Activated B cell treated with CpG ODN at 0.5 μM for 24 hours (primary cell): ENCODE measurements at regions of chr10 and their contacts with region 1.

Region 1: DNA sequence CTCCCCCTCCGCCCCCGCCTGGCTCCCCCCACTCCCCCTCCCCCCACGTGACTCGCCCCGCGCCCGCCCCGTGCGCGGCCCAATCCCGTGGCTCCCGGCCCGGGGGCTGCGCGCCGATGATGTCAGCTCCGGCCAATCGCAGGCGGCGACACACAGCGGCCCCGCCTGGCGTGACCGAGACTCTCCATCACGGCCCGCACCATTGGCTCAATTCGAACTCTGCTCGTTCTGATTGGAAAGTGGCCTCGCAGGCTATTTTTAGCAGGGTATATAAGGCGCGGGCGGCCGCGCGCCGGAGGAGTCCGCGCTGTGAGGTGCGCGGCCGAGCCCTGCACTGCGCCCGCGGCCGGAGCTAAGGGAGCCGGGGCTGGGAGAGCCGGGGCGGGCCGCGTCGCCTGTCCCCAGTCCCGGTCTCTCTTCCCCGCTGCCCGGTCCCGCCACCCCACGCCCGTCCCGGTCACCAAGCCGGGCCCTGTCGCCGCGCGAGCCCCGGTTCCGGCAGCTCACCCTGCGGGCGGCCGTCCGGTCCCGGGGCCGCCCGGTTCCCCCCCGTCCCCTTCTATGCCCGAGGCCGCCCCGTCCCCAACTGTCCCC is 345 bp upstream of the KLF6 start:
- DNase-seq: peak; percentile 98
- ATAC-seq: peak; percentile 71
- H3K4me3 Mint-ChIP-seq: peak overlapping the region; percentile 91
- H3K27ac Mint-ChIP-seq: peak overlapping the region; percentile 98
- H3K4me1 Mint-ChIP-seq: peaks cover 33% of the 10 kb centered on the region
- H3K27me3 Mint-ChIP-seq: no peaks in the 10 kb centered on the region
- CTCF ChIP-seq: no peak

Region 2: GRCh38 chr10:3652886-3653285 is 132.5 kb before region 1 on chr10:
- CTCF ChIA-PET with region 1: no interaction called
- POLR2A ChIA-PET with region 1: interaction called, 10 read pairs
- intact Hi-C with region 1: loop called (anchors 5 kb)
- DNase-seq: no peak
- ATAC-seq: no peak
- H3K4me3 Mint-ChIP-seq: peak overlapping the region; percentile 21
- H3K27ac Mint-ChIP-seq: no peak overlapping the region
- H3K4me1 Mint-ChIP-seq: peaks cover 18% of the 10 kb centered on the region
- H3K27me3 Mint-ChIP-seq: no peaks in the 10 kb centered on the region
- CTCF ChIP-seq: no peak

Region 3: DNA sequence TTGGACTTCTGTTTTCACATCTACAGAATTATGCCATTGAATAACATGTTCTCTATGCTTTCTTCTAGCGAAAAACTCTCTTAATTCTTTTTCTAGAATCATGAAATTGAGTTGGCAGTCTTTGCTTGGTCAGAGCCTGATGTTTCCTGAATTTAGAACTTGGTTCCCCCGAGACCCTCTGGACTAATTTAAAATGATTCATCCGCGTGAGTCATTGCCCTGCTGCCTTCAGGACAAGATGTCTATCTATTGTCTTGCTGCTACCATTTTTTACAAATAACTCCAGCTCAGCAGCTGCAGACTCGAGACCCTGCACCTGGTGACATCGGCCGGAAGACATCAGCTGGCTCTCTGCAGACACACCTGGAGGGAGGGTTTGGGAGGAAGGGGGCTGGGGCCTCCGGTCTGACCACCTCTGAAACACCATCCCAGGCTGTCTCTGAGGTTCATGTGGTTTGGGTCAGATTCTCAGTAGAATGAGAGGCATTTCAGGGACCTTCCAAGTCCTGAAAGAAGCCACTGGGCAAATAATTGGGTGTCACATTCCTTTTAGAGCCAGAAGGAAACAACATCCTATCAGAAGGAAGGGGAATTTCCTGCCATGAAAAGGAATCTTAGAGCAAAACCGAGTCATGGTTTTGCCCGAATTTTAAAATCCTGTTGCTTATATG is 20.6 kb after region 1 on chr10:
- CTCF ChIA-PET with region 1: interaction called, 5 read pairs
- POLR2A ChIA-PET with region 1: interaction called, 144 read pairs
- intact Hi-C with region 1: loop called (anchors 1 kb)
- DNase-seq: peak; percentile 47
- ATAC-seq: peak; percentile 69
- H3K4me3 Mint-ChIP-seq: peak overlapping the region; percentile 73
- H3K27ac Mint-ChIP-seq: peak overlapping the region; percentile 92
- H3K4me1 Mint-ChIP-seq: peaks cover 69% of the 10 kb centered on the region
- H3K27me3 Mint-ChIP-seq: no peaks in the 10 kb centered on the region
- CTCF ChIP-seq: no peak

Region 4: DNA sequence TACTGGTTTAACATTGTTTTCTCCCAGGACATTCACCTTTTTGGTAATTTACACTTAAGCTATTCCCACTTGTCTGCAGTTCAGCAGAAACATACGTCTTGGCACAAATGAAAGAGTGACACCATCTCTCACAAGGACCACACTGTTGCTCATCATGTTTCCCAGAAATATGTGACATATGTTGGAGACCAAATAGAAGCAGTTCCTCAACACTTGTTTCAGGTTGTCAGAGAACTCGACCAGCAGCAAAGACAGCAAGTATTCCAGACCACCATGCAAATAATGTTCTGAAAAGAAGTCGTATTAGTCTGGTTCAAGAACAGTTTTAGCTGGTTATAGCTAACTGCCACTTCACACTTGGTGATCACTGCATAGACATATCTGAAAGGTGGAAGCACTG is 81.0 kb after region 1 on chr10:
- CTCF ChIA-PET with region 1: no interaction called
- POLR2A ChIA-PET with region 1: interaction called, 19 read pairs
- intact Hi-C with region 1: no loop called
- DNase-seq: no peak
- ATAC-seq: peak; percentile 28
- H3K4me3 Mint-ChIP-seq: no peak overlapping the region
- H3K27ac Mint-ChIP-seq: peak overlapping the region; percentile 19
- H3K4me1 Mint-ChIP-seq: peaks cover 33% of the 10 kb centered on the region
- H3K27me3 Mint-ChIP-seq: no peaks in the 10 kb centered on the region
- CTCF ChIP-seq: no peak

Region 5: DNA sequence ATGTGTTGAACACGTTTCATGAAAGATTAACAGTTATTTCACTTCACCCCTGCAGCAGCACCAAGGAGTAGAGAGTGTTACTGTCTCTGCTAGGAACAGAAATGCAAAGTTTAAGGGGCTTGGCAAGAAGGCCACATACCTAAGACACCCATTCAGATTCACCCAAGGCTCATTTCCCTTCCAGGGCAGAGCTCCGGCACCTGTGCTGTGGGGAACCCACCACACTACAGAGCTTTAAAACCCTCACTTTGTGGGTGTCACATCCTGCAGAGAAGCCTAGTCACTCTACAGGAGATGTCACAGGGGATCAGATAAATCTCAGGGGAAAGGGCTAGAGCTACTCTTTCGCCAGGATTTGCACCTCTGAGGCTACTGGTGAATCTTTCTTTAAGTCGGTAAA is 175.7 kb after region 1 on chr10:
- CTCF ChIA-PET with region 1: no interaction called
- POLR2A ChIA-PET with region 1: interaction called, 12 read pairs
- intact Hi-C with region 1: no loop called
- DNase-seq: no peak
- ATAC-seq: peak; percentile 76
- H3K4me3 Mint-ChIP-seq: no peak overlapping the region
- H3K27ac Mint-ChIP-seq: no peak overlapping the region
- H3K4me1 Mint-ChIP-seq: peaks cover 23% of the 10 kb centered on the region
- H3K27me3 Mint-ChIP-seq: no peaks in the 10 kb centered on the region
- CTCF ChIP-seq: no peak

Region 6: DNA sequence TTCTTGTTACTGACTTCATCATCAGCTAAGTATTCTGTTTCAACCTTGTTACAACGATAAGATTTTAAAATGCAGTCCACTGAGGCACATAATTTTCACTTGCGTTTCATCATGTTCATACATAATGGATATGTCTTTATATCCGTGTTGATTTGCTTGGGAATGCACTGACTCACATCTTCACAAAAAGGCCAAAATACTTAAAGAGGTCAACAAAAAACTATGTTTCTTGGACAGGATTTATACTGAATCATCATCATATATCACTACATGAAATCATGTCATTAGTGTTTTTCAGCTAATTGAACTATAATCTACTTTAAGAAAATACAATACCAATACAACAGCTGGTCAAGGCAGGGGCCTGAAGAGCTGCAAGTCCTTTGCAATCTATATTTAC is 324.1 kb after region 1 on chr10:
- CTCF ChIA-PET with region 1: no interaction called
- POLR2A ChIA-PET with region 1: interaction called, 15 read pairs
- intact Hi-C with region 1: no loop called
- DNase-seq: no peak
- ATAC-seq: no peak
- H3K4me3 Mint-ChIP-seq: no peak overlapping the region
- H3K27ac Mint-ChIP-seq: no peak overlapping the region
- H3K4me1 Mint-ChIP-seq: peaks cover 24% of the 10 kb centered on the region
- H3K27me3 Mint-ChIP-seq: no peaks in the 10 kb centered on the region
- CTCF ChIP-seq: no peak

Region 7: DNA sequence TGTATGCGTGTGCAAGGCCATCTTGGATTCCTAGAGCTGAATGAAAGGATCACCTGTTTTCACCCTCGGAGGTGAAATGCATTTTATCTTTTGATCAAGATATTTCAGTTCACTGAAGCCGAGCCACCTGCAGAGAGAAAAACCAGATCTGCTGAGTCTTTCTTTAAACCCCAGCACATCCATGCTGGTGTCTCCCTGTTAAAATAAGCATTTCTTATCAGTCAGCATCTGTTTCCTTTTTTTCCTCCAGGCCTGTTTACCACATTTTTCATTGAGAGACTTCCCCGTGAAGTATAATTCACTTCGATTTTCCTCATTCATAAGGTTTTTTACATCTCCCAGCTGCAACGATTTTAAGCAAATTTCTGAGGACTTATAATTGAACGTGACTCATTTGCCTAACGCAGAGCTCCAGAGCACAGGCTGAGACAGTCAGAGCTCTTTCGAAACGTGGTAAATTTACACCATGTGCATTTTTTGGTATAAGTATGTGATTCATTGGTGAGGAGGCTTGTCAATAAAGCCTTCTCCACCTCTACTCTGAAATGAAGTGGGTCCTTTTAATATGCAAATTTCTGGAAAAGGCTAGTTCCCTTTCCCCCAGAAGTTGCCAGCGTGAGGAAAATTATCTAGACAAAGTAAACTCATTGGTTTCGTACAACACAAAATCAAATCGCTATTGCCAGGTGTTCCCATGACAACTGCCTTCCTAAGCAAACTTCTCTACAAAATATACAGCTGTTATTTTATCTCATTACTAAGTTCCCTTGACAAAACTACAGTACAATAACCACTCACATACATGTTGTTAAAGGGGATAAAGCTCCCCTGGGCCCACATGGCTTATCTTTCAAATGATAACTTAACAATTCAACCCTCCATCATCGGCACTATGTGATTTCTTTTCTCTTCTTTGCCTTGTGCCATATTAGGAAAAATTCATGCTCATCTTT is 665.9 kb after region 1 on chr10:
- CTCF ChIA-PET with region 1: no interaction called
- POLR2A ChIA-PET with region 1: no interaction called
- intact Hi-C with region 1: no loop called
- DNase-seq: no peak
- ATAC-seq: peak; percentile 40
- H3K4me3 Mint-ChIP-seq: no peak overlapping the region
- H3K27ac Mint-ChIP-seq: no peak overlapping the region
- H3K4me1 Mint-ChIP-seq: peaks cover 8% of the 10 kb centered on the region
- H3K27me3 Mint-ChIP-seq: peaks cover 9% of the 10 kb centered on the region
- CTCF ChIP-seq: no peak

Region 8: DNA sequence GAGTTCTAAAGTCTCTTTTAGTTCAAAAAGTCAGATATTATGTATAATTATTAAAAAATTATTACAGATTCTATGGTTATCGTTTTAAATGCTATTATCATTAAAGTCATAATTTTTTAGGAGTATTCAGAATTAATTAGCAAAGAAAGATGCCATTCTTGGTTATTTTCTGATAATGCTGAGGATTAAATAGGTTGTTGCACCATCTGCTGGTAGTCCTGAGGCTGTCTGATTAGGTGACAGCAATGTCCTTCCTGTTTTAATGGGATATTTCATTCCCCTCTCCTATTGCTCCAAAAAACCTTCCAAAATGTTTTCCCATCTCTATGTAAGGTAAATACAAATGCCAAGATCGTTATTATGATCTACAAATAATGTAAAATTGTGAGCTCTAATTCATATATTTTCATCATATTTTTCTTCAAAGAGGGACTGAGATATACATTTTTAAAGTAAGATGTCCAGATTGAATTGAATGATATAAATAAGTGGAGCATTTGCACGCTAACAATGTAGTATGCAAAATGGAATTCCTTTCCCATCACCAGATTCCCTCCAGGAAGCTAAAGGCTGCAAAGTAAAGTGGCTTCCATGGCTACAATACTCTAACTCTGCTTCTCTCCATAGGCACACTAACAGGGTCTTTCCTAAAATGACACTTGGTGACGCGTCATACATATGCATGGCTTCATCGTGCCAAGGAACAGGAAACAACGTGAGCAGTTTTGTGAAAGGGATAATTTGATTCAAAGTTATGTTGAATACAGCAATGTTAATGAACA is 981.9 kb after region 1 on chr10:
- CTCF ChIA-PET with region 1: no interaction called
- POLR2A ChIA-PET with region 1: no interaction called
- intact Hi-C with region 1: loop called (anchors 5 kb)
- DNase-seq: no peak
- ATAC-seq: no peak
- H3K4me3 Mint-ChIP-seq: no peak overlapping the region
- H3K27ac Mint-ChIP-seq: no peak overlapping the region
- H3K4me1 Mint-ChIP-seq: no peaks in the 10 kb centered on the region
- H3K27me3 Mint-ChIP-seq: peaks cover 8% of the 10 kb centered on the region
- CTCF ChIP-seq: no peak